ENCODE measurements at regions of chr20 and their contacts with region 1.

Region 1: GRCh38 chr20:56468316-56469082 is at the start of gene RTF2:
- DNase-seq: peak; percentile 98
- H3K4me3 ChIP-seq: peak within 1 kb of the TSS; percentile 73 to 96 (median 79)
- H3K27ac ChIP-seq: peak within 1 kb of the TSS; percentile 85 to 90 (median 88)
- H3K4me1 ChIP-seq: peaks cover 25 to 35% (median 30%) of the 10 kb centered on the region in 4 donors
- H3K27me3 ChIP-seq: no peaks in the 10 kb centered on the region
- CTCF ChIP-seq: peak in 1 of 3 experiments; percentile 6
- EP300 ChIP-seq: no peak
- POLR2A ChIP-seq: no peak
- total RNA-seq, gene RTF2: 71.0 to 93.3 (median 78.5) TPM

Region 2: GRCh38 chr20:55882910-55883309 is 585.6 kb before region 1 on chr20:
- intact Hi-C with region 1: no loop called
- DNase-seq: no peak
- H3K4me3 ChIP-seq: no peak overlapping the region
- H3K27ac ChIP-seq: no peak overlapping the region
- H3K4me1 ChIP-seq: no peaks in the 10 kb centered on the region
- H3K27me3 ChIP-seq: no peaks in the 10 kb centered on the region
- CTCF ChIP-seq: no peak
- EP300 ChIP-seq: no peak
- POLR2A ChIP-seq: no peak

Region 3: DNA sequence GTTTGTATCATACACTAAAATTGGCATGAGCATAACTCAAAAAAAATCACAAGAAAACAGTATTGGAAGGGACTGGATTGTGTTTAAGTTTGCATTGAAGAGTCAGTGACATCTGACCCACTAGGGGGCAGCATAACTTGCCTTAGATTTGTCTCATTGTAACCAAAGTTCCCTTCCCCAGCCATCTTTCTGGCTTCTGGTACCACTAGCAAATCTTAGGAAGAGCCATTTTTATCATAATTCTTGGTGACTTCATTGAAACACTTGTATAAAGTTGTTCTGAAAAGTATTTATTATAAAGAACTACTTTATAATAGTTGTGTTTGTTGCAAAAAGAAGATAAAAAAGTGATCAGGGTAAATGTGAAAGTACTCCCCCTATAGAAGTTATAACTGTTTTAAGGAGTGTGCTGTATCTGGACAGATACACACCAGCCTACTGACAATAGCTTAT is 68.4 kb before region 1 on chr20:
- intact Hi-C with region 1: loop called (anchors 2 kb)
- DNase-seq: no peak
- H3K4me3 ChIP-seq: no peak overlapping the region
- H3K27ac ChIP-seq: no peak overlapping the region
- H3K4me1 ChIP-seq: peaks cover 0 to 15% (median 2%) of the 10 kb centered on the region in 4 donors
- H3K27me3 ChIP-seq: no peaks in the 10 kb centered on the region
- CTCF ChIP-seq: peak; percentile 68 to 82 (median 75)
- EP300 ChIP-seq: no peak
- POLR2A ChIP-seq: no peak

Measured in esophagus muscularis mucosa (tissue), 4 donors.